Activated CD8-positive, alpha-beta T cell treated with anti-CD3 and anti-CD28 coated beads for 36 hours (primary cell): ENCODE measurements at regions of chr3 and their contacts with region 1.

Region 1: GRCh38 chr3:160941885-160942494 is 163.2 kb downstream of the B3GALNT1 start:
- DNase-seq: peak; percentile 89
- ATAC-seq: peak; percentile 85
- H3K4me3 Mint-ChIP-seq: no peak overlapping the region
- H3K27ac Mint-ChIP-seq: no peak overlapping the region
- H3K4me1 Mint-ChIP-seq: no peaks in the 10 kb centered on the region
- H3K27me3 Mint-ChIP-seq: no peaks in the 10 kb centered on the region
- CTCF ChIP-seq: peak; percentile 77

Region 2: DNA sequence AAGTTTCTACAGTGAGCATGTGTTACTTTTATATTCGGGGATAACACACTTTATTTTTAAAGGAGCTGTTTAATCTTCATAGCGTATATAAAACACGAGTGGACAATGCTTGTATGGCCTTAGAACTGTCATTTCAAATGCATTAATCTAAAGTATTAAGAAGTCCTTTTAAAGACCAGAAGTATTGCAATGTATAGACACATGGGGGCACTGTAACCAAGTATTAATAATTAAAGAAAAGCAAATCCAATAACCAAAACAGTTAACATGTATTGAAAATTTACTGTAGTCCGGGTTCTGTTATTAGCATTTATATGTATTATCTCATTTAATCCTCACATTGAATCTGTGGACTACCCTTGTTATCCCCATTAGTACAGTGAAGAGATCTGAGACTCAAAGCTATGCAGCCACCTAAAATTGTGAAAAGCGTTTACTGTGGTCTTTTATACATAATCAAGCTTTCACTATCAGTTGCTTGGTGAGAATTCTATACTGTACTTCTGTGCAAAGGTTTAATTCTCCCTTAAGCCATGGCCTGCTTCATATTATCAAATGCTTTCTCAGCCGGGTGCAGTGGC is 254.9 kb before region 1 on chr3:
- CTCF ChIA-PET with region 1: interaction called, 16 read pairs
- POLR2A ChIA-PET with region 1: no interaction called
- intact Hi-C with region 1: loop called (anchors 5 kb)
- DNase-seq: no peak
- ATAC-seq: no peak
- H3K4me3 Mint-ChIP-seq: no peak overlapping the region
- H3K27ac Mint-ChIP-seq: no peak overlapping the region
- H3K4me1 Mint-ChIP-seq: no peaks in the 10 kb centered on the region
- H3K27me3 Mint-ChIP-seq: no peaks in the 10 kb centered on the region
- CTCF ChIP-seq: peak; percentile 70

Region 3: DNA sequence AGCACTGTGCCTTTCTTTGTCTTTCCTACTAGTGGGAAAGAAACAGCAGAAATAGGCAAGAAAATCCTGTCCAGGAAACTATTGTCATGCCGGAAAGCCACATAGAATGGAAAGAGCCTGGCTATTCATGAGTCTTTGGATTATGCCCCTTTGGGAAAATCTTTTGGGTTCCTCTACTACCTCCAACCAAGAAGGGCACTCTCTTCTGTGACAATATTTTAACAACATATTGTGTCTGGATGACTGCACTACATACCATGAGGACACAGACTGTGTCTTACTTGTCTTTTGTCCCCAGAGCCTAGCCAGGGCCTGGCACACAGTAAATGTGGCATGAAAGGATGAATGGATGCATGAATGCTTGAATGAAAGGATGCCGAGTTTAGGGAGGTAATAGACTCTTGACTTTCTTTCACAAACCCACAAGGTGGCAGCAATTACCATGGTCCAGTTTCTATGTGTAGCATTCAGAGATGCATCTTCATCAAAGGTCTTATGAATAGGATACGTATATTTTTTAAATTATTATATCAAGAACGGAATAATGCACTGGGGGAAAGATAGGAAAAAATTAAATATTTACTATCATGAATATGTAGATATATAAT is 234.7 kb before region 1 on chr3:
- CTCF ChIA-PET with region 1: interaction called, 20 read pairs
- POLR2A ChIA-PET with region 1: no interaction called
- intact Hi-C with region 1: loop called (anchors 1 kb)
- DNase-seq: peak; percentile 6
- ATAC-seq: peak; percentile 51
- H3K4me3 Mint-ChIP-seq: no peak overlapping the region
- H3K27ac Mint-ChIP-seq: no peak overlapping the region
- H3K4me1 Mint-ChIP-seq: no peaks in the 10 kb centered on the region
- H3K27me3 Mint-ChIP-seq: peaks cover 18% of the 10 kb centered on the region
- CTCF ChIP-seq: peak; percentile 53

Region 4: GRCh38 chr3:160720123-160720746 is 221.8 kb before region 1 on chr3:
- CTCF ChIA-PET with region 1: interaction called, 10 read pairs
- POLR2A ChIA-PET with region 1: no interaction called
- intact Hi-C with region 1: no loop called
- DNase-seq: no peak
- ATAC-seq: no peak
- H3K4me3 Mint-ChIP-seq: no peak overlapping the region
- H3K27ac Mint-ChIP-seq: no peak overlapping the region
- H3K4me1 Mint-ChIP-seq: no peaks in the 10 kb centered on the region
- H3K27me3 Mint-ChIP-seq: peaks cover 9% of the 10 kb centered on the region
- CTCF ChIP-seq: no peak